CD8-positive, alpha-beta T cell (primary cell): ENCODE measurements at regions of chr12 and their contacts with region 1.

Region 1: GRCh38 chr12:4276524-4277204 is 3.1 kb downstream of the CCND2 start:
- DNase-seq: peak; percentile 67 to 94 (median 88)
- ATAC-seq: peak; percentile 30
- H3K4me3 ChIP-seq: no peak overlapping the region
- H3K4me3 Mint-ChIP-seq: peak overlapping the region; percentile 97
- H3K27ac ChIP-seq: peak overlapping the region in 1 of 2 experiments; percentile 94
- H3K27ac Mint-ChIP-seq: peak overlapping the region; percentile 98
- H3K4me1 ChIP-seq: peaks cover 67% of the 10 kb centered on the region
- H3K4me1 Mint-ChIP-seq: peaks cover 65% of the 10 kb centered on the region
- H3K27me3 ChIP-seq: no peaks in the 10 kb centered on the region
- H3K27me3 Mint-ChIP-seq: no peaks in the 10 kb centered on the region
- CTCF ChIP-seq: peak; percentile 83

Region 2: DNA sequence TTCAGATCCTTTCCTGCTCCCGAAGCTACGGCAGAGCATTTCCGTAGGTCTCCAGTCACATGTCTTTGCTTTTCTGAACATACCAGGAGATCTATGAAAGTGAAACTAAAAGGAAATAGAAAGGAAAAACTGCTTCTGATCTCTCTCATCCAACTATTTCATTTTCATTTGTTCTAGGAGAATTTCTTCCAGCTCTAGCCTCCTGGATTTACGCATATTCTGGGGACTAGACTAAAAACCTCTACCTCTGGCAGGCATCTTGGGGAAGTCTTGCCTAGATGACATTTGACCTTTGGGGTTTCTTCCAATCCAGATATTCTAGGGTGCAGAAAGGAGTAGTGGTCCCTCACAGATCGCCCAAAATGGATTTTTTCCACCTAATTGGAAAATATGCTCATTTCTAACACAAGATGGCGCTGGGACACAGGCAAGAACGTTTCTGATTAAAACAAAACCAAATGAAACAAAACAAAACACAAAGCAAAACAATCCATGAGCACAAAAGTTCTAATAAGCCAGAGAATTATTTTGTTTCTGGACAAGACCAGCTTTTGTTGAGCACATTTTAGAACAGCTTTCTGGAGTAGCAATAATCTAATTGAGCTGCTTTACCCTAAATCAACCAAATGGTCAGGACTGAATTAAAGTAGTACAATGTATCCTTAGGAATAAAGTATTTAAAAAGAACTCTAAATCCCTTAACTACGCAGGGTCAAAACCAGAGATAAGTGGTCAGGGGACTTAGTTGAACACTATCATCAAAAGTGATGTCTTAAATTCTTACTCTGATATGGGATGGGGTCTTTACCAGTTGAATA is 391.2 kb before region 1 on chr12:
- CTCF ChIA-PET with region 1: interaction called, 260 read pairs
- POLR2A ChIA-PET with region 1: interaction called, 13 read pairs
- intact Hi-C with region 1: loop called (anchors 1 kb)
- DNase-seq: peak in 8 of 9 experiments; percentile 28 to 76 (median 43)
- ATAC-seq: peak; percentile 62
- H3K4me3 ChIP-seq: no peak overlapping the region
- H3K4me3 Mint-ChIP-seq: no peak overlapping the region
- H3K27ac ChIP-seq: no peak overlapping the region
- H3K27ac Mint-ChIP-seq: peak overlapping the region; percentile 83
- H3K4me1 ChIP-seq: no peaks in the 10 kb centered on the region
- H3K4me1 Mint-ChIP-seq: peaks cover 9% of the 10 kb centered on the region
- H3K27me3 ChIP-seq: no peaks in the 10 kb centered on the region
- H3K27me3 Mint-ChIP-seq: no peaks in the 10 kb centered on the region
- CTCF ChIP-seq: peak; percentile 93

Region 3: GRCh38 chr12:3988519-3989448 is 287.9 kb before region 1 on chr12:
- CTCF ChIA-PET with region 1: interaction called, 168 read pairs
- POLR2A ChIA-PET with region 1: interaction called, 5 read pairs
- intact Hi-C with region 1: no loop called
- DNase-seq: peak in 6 of 9 experiments; percentile 26 to 60 (median 30)
- ATAC-seq: peak; percentile 89
- H3K4me3 ChIP-seq: peak overlapping the region in 1 of 2 experiments; percentile 2
- H3K4me3 Mint-ChIP-seq: peak overlapping the region; percentile 60
- H3K27ac ChIP-seq: peak overlapping the region; percentile 5 to 52
- H3K27ac Mint-ChIP-seq: peak overlapping the region; percentile 91
- H3K4me1 ChIP-seq: peaks cover 29% of the 10 kb centered on the region
- H3K4me1 Mint-ChIP-seq: peaks cover 30% of the 10 kb centered on the region
- H3K27me3 ChIP-seq: no peaks in the 10 kb centered on the region
- H3K27me3 Mint-ChIP-seq: no peaks in the 10 kb centered on the region
- CTCF ChIP-seq: no peak

Region 4: GRCh38 chr12:4037747-4038312 is 238.8 kb before region 1 on chr12:
- CTCF ChIA-PET with region 1: interaction called, 75 read pairs
- POLR2A ChIA-PET with region 1: interaction called, 5 read pairs
- intact Hi-C with region 1: loop called in 1 of 2 experiments (anchors 2 kb)
- DNase-seq: peak in 4 of 9 experiments; percentile 18 to 42 (median 24)
- ATAC-seq: no peak
- H3K4me3 ChIP-seq: no peak overlapping the region
- H3K4me3 Mint-ChIP-seq: no peak overlapping the region
- H3K27ac ChIP-seq: no peak overlapping the region
- H3K27ac Mint-ChIP-seq: no peak overlapping the region
- H3K4me1 ChIP-seq: no peaks in the 10 kb centered on the region
- H3K4me1 Mint-ChIP-seq: no peaks in the 10 kb centered on the region
- H3K27me3 ChIP-seq: no peaks in the 10 kb centered on the region
- H3K27me3 Mint-ChIP-seq: no peaks in the 10 kb centered on the region
- CTCF ChIP-seq: peak; percentile 42

Region 5: DNA sequence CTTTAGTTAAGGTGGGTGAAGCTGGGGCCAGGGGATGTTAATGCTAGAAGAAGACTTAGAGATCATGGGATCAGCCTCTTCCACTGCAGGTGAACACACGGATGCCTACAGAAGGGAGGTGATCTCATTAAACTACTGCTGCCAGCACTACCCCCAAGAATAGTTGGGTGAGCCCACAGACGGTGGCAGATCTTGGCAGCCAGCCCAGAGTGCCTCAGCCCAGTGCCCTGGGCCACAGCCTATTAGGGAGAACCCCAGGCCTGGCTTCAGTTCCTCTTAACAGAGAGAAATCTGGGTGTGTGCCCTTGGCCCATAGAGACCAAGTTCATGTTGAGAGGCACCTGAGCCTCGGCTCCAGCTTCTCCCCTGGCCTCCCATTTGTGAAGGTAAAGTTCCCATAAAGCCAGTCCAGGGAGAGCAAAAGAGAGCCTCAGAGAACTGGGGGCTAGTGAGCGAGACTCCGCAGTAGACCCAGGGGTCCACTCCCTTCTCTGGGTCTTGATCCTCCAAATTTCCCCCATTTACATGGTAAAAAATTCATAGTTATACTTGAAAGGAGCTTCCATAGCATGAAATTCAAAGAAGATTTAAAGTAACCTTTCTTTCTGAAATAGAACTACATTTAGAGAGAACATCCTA is 128.1 kb before region 1 on chr12:
- CTCF ChIA-PET with region 1: interaction called, 65 read pairs
- POLR2A ChIA-PET with region 1: interaction called, 8 read pairs
- intact Hi-C with region 1: loop called (anchors 2 to 10 kb)
- DNase-seq: peak; percentile 29 to 75 (median 51)
- ATAC-seq: peak; percentile 65
- H3K4me3 ChIP-seq: no peak overlapping the region
- H3K4me3 Mint-ChIP-seq: no peak overlapping the region
- H3K27ac ChIP-seq: no peak overlapping the region
- H3K27ac Mint-ChIP-seq: no peak overlapping the region
- H3K4me1 ChIP-seq: peaks cover 20% of the 10 kb centered on the region
- H3K4me1 Mint-ChIP-seq: peaks cover 36% of the 10 kb centered on the region
- H3K27me3 ChIP-seq: no peaks in the 10 kb centered on the region
- H3K27me3 Mint-ChIP-seq: no peaks in the 10 kb centered on the region
- CTCF ChIP-seq: no peak

Region 6: DNA sequence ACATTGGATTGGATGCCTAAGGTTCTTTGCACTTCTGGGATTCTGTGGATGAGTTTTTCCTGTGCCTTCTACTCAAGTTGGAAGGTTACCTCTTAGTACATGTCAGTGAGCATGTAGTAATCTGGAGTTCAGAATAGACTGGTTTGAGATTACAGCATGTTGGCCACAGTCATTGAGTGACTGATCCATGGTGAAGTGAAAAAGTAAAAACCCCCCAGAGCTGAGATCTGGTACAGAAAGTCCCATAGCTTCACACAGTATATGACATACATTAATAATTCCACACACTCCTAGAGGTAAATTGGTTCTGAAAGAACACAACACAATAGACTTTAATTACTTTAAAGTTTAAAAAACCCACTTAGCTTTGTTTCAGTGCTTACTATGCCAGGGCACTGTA is 15.0 kb before region 1 on chr12:
- CTCF ChIA-PET with region 1: interaction called, 27 read pairs
- POLR2A ChIA-PET with region 1: interaction called, 25 read pairs
- intact Hi-C with region 1: no loop called
- DNase-seq: no peak
- ATAC-seq: no peak
- H3K4me3 ChIP-seq: no peak overlapping the region
- H3K4me3 Mint-ChIP-seq: no peak overlapping the region
- H3K27ac ChIP-seq: no peak overlapping the region
- H3K27ac Mint-ChIP-seq: no peak overlapping the region
- H3K4me1 ChIP-seq: no peaks in the 10 kb centered on the region
- H3K4me1 Mint-ChIP-seq: no peaks in the 10 kb centered on the region
- H3K27me3 ChIP-seq: no peaks in the 10 kb centered on the region
- H3K27me3 Mint-ChIP-seq: no peaks in the 10 kb centered on the region
- CTCF ChIP-seq: no peak

Region 7: DNA sequence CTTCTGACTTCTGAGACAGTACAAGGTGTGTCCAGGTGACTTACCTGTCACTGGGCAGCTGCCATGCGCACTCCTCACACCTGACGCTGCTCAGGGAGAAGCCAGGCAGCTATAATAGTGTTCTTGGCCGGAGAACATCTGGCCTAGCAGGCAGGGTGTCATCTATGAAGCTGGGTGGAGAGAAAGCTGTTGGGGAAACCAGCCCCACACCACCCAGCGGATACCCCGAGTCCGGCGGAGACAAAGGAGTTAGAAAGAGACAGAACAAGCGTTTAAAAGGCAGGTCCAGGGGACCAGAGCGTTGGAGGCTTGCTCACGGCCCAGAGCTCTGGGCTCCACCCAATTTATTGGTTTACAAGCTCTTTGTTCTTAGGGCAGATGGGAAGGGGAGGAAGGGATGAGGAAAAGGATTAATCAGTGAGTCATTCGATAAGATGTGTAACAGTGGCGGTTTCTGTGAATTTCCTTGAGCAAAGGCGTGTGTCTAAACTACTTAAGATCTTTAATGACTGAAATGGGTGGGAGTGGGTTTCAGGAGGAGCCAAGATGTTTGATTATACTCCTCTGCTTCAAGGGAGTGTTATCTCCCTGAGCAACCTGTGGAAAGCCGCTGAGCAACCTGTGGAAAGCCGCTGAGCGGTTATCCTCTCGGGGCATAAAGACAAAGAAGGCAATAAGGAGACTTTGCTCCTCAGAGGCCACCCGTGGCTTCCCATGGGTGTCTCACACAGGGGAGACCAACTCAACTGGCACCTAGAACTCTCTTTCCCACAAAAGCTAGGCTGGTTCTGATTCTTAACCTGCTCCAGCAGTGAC is 443.4 kb after region 1 on chr12 and contains the start of gene GALNT8:
- CTCF ChIA-PET with region 1: no interaction called
- POLR2A ChIA-PET with region 1: no interaction called
- intact Hi-C with region 1: no loop called
- DNase-seq: no peak
- ATAC-seq: no peak
- H3K4me3 ChIP-seq: no peak within 1 kb of the TSS
- H3K4me3 Mint-ChIP-seq: no peak within 1 kb of the TSS
- H3K27ac ChIP-seq: no peak within 1 kb of the TSS
- H3K27ac Mint-ChIP-seq: no peak within 1 kb of the TSS
- H3K4me1 ChIP-seq: no peaks in the 10 kb centered on the region
- H3K4me1 Mint-ChIP-seq: no peaks in the 10 kb centered on the region
- H3K27me3 ChIP-seq: no peaks in the 10 kb centered on the region
- H3K27me3 Mint-ChIP-seq: peaks cover 33% of the 10 kb centered on the region
- CTCF ChIP-seq: no peak
- total RNA-seq, gene GALNT8: 0.33 to 0.92 TPM